Activated naive CD4-positive, alpha-beta T cell treated with anti-CD3 and anti-CD28 coated beads, Interleukin-2, amount 10 ng/mL, durations not matched to agents 7 days and 5 days (primary cell): ENCODE measurements at regions of chr15 and their contacts with region 1.

Region 1: GRCh38 chr15:90482124-90483011 is 47.4 kb upstream of the CRTC3 start:
- DNase-seq: peak; percentile 68
- H3K4me3 Mint-ChIP-seq: no peak overlapping the region
- H3K27ac Mint-ChIP-seq: peak overlapping the region; percentile 50
- H3K4me1 Mint-ChIP-seq: peaks cover 39% of the 10 kb centered on the region
- H3K27me3 Mint-ChIP-seq: no peaks in the 10 kb centered on the region

Region 2: GRCh38 chr15:90306560-90306959 is 175.8 kb before region 1 on chr15:
- CTCF ChIA-PET with region 1: interaction called, 16 read pairs
- DNase-seq: peak; percentile 50
- H3K4me3 Mint-ChIP-seq: no peak overlapping the region
- H3K27ac Mint-ChIP-seq: peak overlapping the region; percentile 70
- H3K4me1 Mint-ChIP-seq: peaks cover 24% of the 10 kb centered on the region
- H3K27me3 Mint-ChIP-seq: peaks cover 6% of the 10 kb centered on the region

Region 3: GRCh38 chr15:90336705-90337141 is 145.6 kb before region 1 on chr15:
- CTCF ChIA-PET with region 1: interaction called, 10 read pairs
- DNase-seq: peak; percentile 45
- H3K4me3 Mint-ChIP-seq: no peak overlapping the region
- H3K27ac Mint-ChIP-seq: no peak overlapping the region
- H3K4me1 Mint-ChIP-seq: peaks cover 10% of the 10 kb centered on the region
- H3K27me3 Mint-ChIP-seq: no peaks in the 10 kb centered on the region

Region 4: GRCh38 chr15:90407871-90408317 is 74.5 kb before region 1 on chr15:
- CTCF ChIA-PET with region 1: interaction called, 11 read pairs
- DNase-seq: peak; percentile 32
- H3K4me3 Mint-ChIP-seq: no peak overlapping the region
- H3K27ac Mint-ChIP-seq: peak overlapping the region; percentile 17
- H3K4me1 Mint-ChIP-seq: peaks cover 74% of the 10 kb centered on the region
- H3K27me3 Mint-ChIP-seq: no peaks in the 10 kb centered on the region